Cardiac septum (tissue), 1 donor: ENCODE measurements at regions of chr1 and their contacts with region 1.

Region 1: GRCh38 chr1:165444897-165445370 is at the start of gene RXRG:
- DNase-seq: no peak
- total RNA-seq, gene RXRG: 5.1 TPM

Region 2: DNA sequence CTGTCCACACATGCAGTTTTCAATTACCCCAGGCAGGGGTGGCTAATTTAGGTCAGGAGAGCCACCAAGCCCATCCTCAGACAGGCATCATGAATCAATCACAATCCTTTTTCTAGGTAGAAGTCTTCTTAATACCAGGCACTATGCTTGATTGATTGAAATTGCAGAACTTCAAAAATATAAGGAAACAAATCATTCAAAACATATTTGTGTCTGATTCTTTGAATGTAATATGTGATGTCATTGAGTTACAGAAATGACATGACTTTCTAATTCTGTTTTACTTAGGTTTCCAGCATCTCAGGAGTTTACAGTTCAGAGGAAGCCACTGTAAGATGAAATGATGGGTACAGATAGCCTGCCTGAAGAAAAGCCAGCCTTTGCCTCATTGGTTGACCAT is 26.7 kb before region 1 on chr1:
- intact Hi-C with region 1: loop called (anchors 1 kb)
- DNase-seq: no peak